ENCODE measurements at regions of chr4 and their contacts with region 1.

Region 1: DNA sequence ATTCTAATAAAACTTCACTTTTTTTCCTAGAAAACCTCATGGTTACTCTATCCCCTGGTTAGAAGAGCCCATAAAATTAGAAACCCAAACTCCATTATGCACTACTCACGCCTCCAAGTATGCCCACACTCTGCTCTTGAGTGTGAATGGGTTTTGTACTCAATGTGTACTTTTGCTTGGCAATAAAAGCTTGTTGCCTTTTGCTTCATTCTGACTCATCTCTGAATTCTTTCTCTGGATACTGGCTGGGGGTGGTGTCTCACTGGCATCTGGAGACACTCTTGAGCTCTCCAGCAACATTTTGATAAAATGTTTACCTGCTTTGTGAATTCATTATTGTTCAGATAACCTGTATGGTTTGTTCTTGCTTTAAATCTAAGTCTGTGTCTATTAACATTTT is 963.3 kb downstream of the TRAM1L1 start:
- DNase-seq: peak; percentile 79
- ATAC-seq: peak; percentile 96
- H3K4me3 ChIP-seq: no peak overlapping the region
- H3K27ac ChIP-seq: peak overlapping the region; percentile 73
- H3K4me1 ChIP-seq: peaks cover 22% of the 10 kb centered on the region
- H3K27me3 ChIP-seq: no peaks in the 10 kb centered on the region
- CTCF ChIP-seq: no peak

Region 2: DNA sequence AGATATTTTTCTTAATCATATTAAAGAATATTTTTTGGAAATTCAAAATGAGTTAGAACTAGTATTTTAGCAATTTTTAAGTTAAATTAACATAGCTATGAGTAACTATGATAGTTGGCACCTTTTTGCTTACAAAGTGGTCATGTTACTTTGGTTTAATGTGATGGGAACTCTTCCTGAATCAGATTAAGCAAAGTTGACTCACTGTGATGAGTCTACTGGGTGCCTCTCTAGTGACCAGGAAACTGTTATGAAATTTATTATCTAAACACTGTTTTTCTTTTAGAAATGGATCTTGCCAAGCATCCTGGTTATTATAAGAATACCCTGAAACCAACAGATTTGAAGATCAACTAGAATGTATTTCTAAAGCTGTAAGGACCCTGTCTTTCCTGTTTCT is 22.5 kb before region 1 on chr4:
- CTCF ChIA-PET with region 1: no interaction called
- POLR2A ChIA-PET with region 1: no interaction called
- intact Hi-C with region 1: loop called (anchors 2 kb)
- DNase-seq: peak; percentile 67
- ATAC-seq: peak; percentile 78
- H3K4me3 ChIP-seq: no peak overlapping the region
- H3K27ac ChIP-seq: peak overlapping the region; percentile 77
- H3K4me1 ChIP-seq: peaks cover 24% of the 10 kb centered on the region
- H3K27me3 ChIP-seq: no peaks in the 10 kb centered on the region
- CTCF ChIP-seq: no peak

Region 3: DNA sequence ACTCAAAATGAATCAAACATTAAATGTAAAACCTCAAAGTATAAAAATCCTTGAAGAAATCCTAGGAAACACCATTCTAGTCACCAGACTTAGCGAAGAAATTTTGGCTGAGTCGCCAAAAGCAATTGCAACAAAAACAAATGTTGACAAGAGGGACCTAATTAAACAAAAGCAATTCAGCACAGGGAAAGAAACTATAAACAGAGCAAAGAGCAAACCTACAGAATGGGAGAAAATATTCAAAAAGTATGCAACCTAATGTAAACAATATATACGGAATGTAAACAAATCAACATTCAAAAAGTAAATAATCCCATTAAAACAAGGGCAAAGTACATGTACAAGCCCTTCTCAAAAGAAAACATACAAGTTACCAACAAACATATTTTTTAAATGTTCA is 11.4 kb before region 1 on chr4:
- CTCF ChIA-PET with region 1: no interaction called
- POLR2A ChIA-PET with region 1: no interaction called
- intact Hi-C with region 1: no loop called
- DNase-seq: no peak
- ATAC-seq: no peak
- H3K4me3 ChIP-seq: no peak overlapping the region
- H3K27ac ChIP-seq: no peak overlapping the region
- H3K4me1 ChIP-seq: no peaks in the 10 kb centered on the region
- H3K27me3 ChIP-seq: no peaks in the 10 kb centered on the region
- CTCF ChIP-seq: no peak

Region 4: GRCh38 chr4:116202524-116202923 is 80.4 kb after region 1 on chr4:
- CTCF ChIA-PET with region 1: no interaction called
- POLR2A ChIA-PET with region 1: no interaction called
- intact Hi-C with region 1: no loop called
- DNase-seq: no peak
- ATAC-seq: no peak
- H3K4me3 ChIP-seq: no peak overlapping the region
- H3K27ac ChIP-seq: no peak overlapping the region
- H3K4me1 ChIP-seq: no peaks in the 10 kb centered on the region
- H3K27me3 ChIP-seq: no peaks in the 10 kb centered on the region
- CTCF ChIP-seq: no peak